Mammary epithelial cell (primary cell): ENCODE measurements at regions of chr7 and their contacts with region 1.

Region 1: GRCh38 chr7:134420424-134421125 is 38.3 kb downstream of the AKR1B1 start:
- DNase-seq: peak; percentile 55
- H3K4me3 ChIP-seq: no peak overlapping the region
- H3K27ac ChIP-seq: no peak overlapping the region
- H3K4me1 ChIP-seq: peaks cover 6% of the 10 kb centered on the region
- H3K27me3 ChIP-seq: no peaks in the 10 kb centered on the region
- CTCF ChIP-seq: peak; percentile 76 to 89

Region 2: DNA sequence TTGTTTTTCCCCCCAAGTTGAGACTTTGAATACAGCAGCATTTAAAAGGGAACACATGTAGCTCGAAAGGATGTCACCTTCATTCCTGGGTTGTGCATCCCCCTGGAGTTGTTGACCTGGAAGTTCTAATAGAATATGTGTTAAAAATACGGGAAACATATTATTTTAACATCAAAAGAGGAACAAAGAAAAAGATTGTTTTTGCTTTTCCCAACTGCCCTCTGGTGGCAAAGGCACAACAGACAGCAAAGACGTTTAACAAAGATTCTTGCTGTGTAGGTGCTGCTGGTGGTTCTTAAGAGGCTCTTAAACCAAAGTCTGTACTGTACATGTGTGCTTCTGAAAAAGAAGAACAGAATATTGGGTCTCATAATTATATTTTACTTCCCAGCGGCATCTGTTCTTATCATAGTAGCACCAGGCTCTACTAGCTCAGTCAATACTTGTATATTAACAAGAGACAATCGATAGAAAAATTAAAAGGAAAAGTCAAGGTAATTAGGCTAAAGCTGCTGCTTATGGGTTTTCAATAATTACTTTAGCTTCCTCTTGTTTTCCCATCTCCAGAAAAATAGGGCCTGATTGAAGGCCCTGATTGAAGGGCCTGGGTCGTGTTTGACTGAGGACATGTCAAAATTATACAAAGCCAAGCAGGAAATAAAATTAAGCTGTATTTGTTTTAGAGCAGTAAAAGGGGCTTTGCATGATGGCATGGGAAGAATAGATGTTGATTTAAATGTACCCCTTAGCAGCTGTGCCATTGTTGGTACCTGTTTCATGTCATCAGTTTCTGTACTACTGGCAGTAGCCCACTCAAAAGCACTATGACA is 677.7 kb before region 1 on chr7:
- CTCF ChIA-PET with region 1: no interaction called
- dilution Hi-C with region 1: no loop called
- in situ Hi-C with region 1: no loop called
- intact Hi-C with region 1: loop called (anchors 10 kb)
- DNase-seq: peak; percentile 16
- H3K4me3 ChIP-seq: no peak overlapping the region
- H3K27ac ChIP-seq: no peak overlapping the region
- H3K4me1 ChIP-seq: peaks cover 14% of the 10 kb centered on the region
- H3K27me3 ChIP-seq: no peaks in the 10 kb centered on the region
- CTCF ChIP-seq: peak; percentile 53 to 63

Region 3: DNA sequence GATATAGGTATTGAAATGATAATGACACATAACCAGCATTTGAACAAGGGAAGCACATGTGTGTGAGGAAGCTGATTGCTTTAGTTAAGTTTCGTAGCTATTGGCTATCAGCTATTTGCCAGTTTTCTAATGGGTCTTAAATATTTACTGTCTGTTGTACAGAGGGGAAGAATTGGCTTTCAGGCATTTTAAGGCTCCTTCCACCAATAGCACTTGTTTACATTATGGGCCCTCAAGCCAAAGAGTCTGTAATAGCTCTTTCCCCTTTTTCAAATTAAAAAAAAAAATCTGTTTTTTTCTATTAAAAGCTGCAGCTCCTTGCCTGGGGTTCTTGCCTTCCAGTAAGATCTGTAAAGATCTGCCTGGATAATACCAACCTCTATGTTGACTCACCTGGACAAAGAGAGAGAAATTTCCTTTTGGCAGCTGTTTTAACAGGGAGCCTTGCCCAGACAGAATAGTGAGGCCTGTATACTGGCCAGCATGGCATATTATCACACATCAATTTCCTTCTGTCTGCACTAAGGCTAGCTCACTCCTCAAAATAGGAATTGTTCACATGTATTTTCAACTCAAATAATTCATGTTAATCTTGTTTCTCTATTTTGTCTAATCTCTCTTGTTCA is 398.2 kb before region 1 on chr7:
- CTCF ChIA-PET with region 1: interaction called, 3 read pairs
- dilution Hi-C with region 1: no loop called
- in situ Hi-C with region 1: no loop called
- intact Hi-C with region 1: loop called (anchors 2 kb)
- DNase-seq: peak; percentile 50
- H3K4me3 ChIP-seq: no peak overlapping the region
- H3K27ac ChIP-seq: peak overlapping the region; percentile 12
- H3K4me1 ChIP-seq: peaks cover 5% of the 10 kb centered on the region
- H3K27me3 ChIP-seq: no peaks in the 10 kb centered on the region
- CTCF ChIP-seq: no peak

Region 4: GRCh38 chr7:134140889-134141867 is 279.4 kb before region 1 on chr7:
- CTCF ChIA-PET with region 1: interaction called, 3 read pairs
- dilution Hi-C with region 1: no loop called
- in situ Hi-C with region 1: loop called in 1 of 2 experiments (anchors 25 kb)
- intact Hi-C with region 1: loop called (anchors 1 kb)
- DNase-seq: peak; percentile 32
- H3K4me3 ChIP-seq: no peak overlapping the region
- H3K27ac ChIP-seq: no peak overlapping the region
- H3K4me1 ChIP-seq: no peaks in the 10 kb centered on the region
- H3K27me3 ChIP-seq: no peaks in the 10 kb centered on the region
- CTCF ChIP-seq: peak; percentile 86 to 95

Region 5: DNA sequence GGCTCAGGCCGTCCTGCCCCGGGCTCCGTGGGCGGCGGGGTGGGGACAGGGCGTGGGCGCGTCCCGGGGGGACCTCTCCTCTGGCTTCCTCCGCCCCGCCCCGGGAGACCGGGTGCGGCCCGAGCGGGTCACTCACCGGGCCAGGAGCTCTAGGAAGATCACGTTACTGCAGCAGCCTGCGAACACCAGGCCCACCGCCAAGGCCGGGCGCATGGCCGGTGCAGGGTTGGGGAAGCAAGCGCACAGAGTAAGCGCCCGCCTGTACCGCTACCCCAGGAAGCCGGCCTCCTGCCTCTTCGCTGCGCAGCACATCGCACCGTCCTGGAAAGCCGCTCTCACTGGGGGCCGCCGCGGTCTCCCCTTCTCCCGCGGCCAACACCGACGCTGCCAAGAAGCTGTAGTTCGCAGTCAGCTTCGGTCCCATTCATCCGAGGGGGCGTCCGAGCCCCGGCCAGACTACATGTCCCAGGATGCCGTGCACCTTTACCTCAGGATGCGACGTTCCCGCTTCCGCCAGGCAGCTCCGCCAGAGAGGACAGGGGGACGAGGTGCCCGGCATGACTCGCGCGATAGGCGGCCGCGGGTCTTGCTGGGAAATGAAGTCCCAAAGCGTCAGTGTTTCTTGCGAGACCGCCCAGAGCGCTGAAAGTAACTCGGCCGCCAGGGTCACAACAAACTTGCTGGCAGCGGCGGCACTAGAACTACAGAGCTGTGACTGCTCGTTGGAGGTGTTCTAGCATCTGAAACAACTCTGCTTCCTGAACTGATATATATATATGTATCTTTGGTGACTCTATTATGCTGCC is 103.8 kb before region 1 on chr7 and contains the start of gene SLC35B4:
- CTCF ChIA-PET with region 1: interaction called, 5 read pairs
- dilution Hi-C with region 1: no loop called
- in situ Hi-C with region 1: no loop called
- intact Hi-C with region 1: loop called (anchors 5 kb)
- DNase-seq: peak; percentile 96
- H3K4me3 ChIP-seq: peak within 1 kb of the TSS; percentile 79 to 89 (median 88)
- H3K27ac ChIP-seq: peak within 1 kb of the TSS; percentile 59
- H3K4me1 ChIP-seq: peaks cover 14% of the 10 kb centered on the region
- H3K27me3 ChIP-seq: no peaks in the 10 kb centered on the region
- CTCF ChIP-seq: peak; percentile 7 to 35
- total RNA-seq, gene SLC35B4: 16.3 to 22.6 TPM

Region 6: DNA sequence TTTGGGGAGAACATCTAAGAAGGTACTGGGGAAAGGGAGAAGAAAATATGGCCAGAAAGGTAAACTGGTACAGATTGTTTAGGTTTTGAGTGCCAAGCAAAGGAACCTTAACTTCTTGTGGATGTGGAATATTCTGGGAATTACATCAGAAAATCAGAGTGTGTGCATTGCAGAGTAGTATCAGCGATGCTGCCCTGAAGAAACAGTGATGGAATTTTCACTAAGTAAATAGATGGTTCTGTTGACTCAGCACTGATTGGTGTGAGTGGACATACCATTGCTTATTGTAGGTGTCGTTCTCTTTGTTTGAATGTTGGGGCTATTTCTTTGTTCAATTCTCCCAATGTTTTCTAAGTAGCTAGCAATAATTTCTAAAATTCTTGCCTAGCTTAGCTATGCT is 62.7 kb after region 1 on chr7:
- CTCF ChIA-PET with region 1: no interaction called
- dilution Hi-C with region 1: no loop called
- in situ Hi-C with region 1: no loop called
- intact Hi-C with region 1: no loop called
- DNase-seq: no peak
- H3K4me3 ChIP-seq: no peak overlapping the region
- H3K27ac ChIP-seq: no peak overlapping the region
- H3K4me1 ChIP-seq: peaks cover 15% of the 10 kb centered on the region
- H3K27me3 ChIP-seq: peaks cover 2% of the 10 kb centered on the region
- CTCF ChIP-seq: no peak